Naive thymus-derived CD8-positive, alpha-beta T cell (primary cell): ENCODE measurements at regions of chr2 and their contacts with region 1.

Region 1: DNA sequence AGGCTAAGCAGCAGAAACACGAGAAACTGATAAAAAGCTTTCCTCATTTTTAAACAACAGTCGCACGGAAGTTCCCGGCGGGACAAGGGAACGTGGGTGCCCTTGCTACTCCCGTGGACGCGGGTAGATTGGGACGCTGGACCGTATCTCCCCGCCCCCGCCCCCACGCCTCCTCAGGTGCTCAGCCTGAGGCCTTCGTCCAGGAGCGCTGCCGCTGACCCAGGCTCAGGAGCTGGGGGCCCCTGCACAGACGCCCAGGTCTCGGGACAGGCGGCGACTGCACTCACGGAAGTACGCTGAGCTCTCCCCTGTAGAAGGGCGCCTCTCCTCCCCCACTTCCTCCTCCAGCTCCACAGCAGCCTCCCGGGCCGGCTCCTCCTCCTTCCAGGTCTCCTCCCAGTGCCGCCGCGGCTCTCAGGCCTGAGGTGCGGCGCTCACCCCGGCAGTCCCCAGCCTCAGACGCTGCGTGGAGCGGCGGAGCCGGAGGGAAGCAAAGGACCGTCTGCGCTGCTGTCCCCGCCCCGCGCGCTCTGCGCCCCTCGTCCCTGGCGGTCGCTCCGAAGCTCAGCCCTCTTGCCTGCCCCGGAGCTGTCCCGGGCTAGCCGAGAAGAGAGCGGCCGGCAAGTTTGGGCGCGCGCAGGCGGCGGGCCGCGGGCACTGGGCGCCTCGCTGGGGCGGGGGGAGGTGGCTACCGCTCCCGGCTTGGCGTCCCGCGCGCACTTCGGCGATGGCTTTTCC is at the start of gene ITGAV:
- DNase-seq: peak; percentile 57 to 89 (median 76)
- ATAC-seq: peak; percentile 91 to 92
- H3K4me3 Mint-ChIP-seq: peak within 1 kb of the TSS; percentile 78 to 98 (median 94)
- H3K27ac Mint-ChIP-seq: peak within 1 kb of the TSS; percentile 35 to 91 (median 86)
- H3K4me1 Mint-ChIP-seq: peaks cover 10 to 43% (median 28%) of the 10 kb centered on the region in 4 donors
- H3K27me3 Mint-ChIP-seq: peaks cover 2 to 11% (median 4%) of the 10 kb centered on the region in 5 donors
- polyA plus RNA-seq, gene ITGAV: 0.25 to 0.66 (median 0.35) TPM

Region 2: GRCh38 chr2:186485871-186486650 is 103.7 kb before region 1 on chr2 and contains the start of gene ZC3H15:
- POLR2A ChIA-PET with region 1: interaction called, 19 read pairs
- DNase-seq: peak; percentile 93 to 98 (median 96)
- ATAC-seq: peak; percentile 91
- H3K4me3 Mint-ChIP-seq: peak within 1 kb of the TSS; percentile 94 to 100 (median 98)
- H3K27ac Mint-ChIP-seq: peak within 1 kb of the TSS; percentile 97 to 100 (median 99)
- H3K4me1 Mint-ChIP-seq: peaks cover 36 to 72% (median 66%) of the 10 kb centered on the region in 4 donors
- H3K27me3 Mint-ChIP-seq: no peaks in the 10 kb centered on the region
- polyA plus RNA-seq, gene ZC3H15: 57.3 to 77.8 (median 61.6) TPM

Region 3: GRCh38 chr2:186617771-186618170 is 28.0 kb after region 1 on chr2:
- POLR2A ChIA-PET with region 1: no interaction called
- DNase-seq: no peak
- ATAC-seq: no peak
- H3K4me3 Mint-ChIP-seq: no peak overlapping the region
- H3K27ac Mint-ChIP-seq: no peak overlapping the region
- H3K4me1 Mint-ChIP-seq: no peaks in the 10 kb centered on the region
- H3K27me3 Mint-ChIP-seq: no peaks in the 10 kb centered on the region